ENCODE measurements at regions of chr5 and their contacts with region 1.

Region 1: GRCh38 chr5:116953251-116953930 is 378.8 kb upstream of the SEMA6A start:
- DNase-seq: no peak
- H3K4me3 ChIP-seq: no peak overlapping the region
- H3K27ac ChIP-seq: no peak overlapping the region
- H3K4me1 ChIP-seq: no peaks in the 10 kb centered on the region
- H3K27me3 ChIP-seq: no peaks in the 10 kb centered on the region
- CTCF ChIP-seq: no peak
- POLR2A ChIP-seq: no peak

Region 2: GRCh38 chr5:116583085-116583861 is 370.1 kb before region 1 on chr5:
- intact Hi-C with region 1: loop called (anchors 10 kb)
- DNase-seq: no peak
- H3K4me3 ChIP-seq: no peak overlapping the region
- H3K27ac ChIP-seq: no peak overlapping the region
- H3K4me1 ChIP-seq: no peaks in the 10 kb centered on the region
- H3K27me3 ChIP-seq: peaks cover 0 to 15% (median 0%) of the 10 kb centered on the region in 7 donors
- CTCF ChIP-seq: no peak
- POLR2A ChIP-seq: no peak

Region 3: DNA sequence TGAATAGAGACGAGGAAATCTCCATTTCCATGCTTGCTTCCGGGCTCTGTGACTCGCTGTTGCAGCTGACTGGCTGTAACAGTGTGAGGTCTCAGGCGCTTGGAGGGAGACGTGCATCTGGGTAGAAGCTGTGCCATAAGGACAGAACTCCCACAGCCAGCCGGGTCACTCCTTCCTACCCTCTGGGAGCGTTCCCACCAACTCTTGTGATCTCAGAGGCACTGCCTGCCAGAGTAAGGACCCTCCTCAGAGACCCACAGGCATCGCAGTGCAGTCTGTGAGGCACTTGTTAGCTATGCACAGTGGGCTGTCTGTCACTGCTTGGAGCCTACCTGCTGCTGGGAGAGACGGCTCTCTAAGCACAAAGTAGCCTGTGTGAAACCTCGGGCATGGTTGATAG is 175.4 kb before region 1 on chr5:
- intact Hi-C with region 1: no loop called
- DNase-seq: no peak
- H3K4me3 ChIP-seq: no peak overlapping the region
- H3K27ac ChIP-seq: peak overlapping the region in 1 of 8 donors; percentile 4
- H3K4me1 ChIP-seq: peaks cover 0 to 10% (median 0%) of the 10 kb centered on the region in 6 donors
- H3K27me3 ChIP-seq: no peaks in the 10 kb centered on the region
- CTCF ChIP-seq: no peak
- POLR2A ChIP-seq: no peak